HepG2 (cell line): ENCODE measurements at regions of chr5 and their contacts with region 1.

Region 1: GRCh38 chr5:149035372-149035790 is 27.5 kb downstream of the SH3TC2 start:
- DNase-seq: peak; percentile 53
- ATAC-seq: peak; percentile 96
- H3K4me3 ChIP-seq: no peak overlapping the region
- H3K27ac ChIP-seq: no peak overlapping the region
- H3K4me1 ChIP-seq: no peaks in the 10 kb centered on the region
- H3K27me3 ChIP-seq: no peaks in the 10 kb centered on the region
- CTCF ChIP-seq: peak; percentile 90
- EP300 ChIP-seq: no peak
- POLR2A ChIP-seq: no peak
- RAD21 ChIP-seq: no peak

Region 2: DNA sequence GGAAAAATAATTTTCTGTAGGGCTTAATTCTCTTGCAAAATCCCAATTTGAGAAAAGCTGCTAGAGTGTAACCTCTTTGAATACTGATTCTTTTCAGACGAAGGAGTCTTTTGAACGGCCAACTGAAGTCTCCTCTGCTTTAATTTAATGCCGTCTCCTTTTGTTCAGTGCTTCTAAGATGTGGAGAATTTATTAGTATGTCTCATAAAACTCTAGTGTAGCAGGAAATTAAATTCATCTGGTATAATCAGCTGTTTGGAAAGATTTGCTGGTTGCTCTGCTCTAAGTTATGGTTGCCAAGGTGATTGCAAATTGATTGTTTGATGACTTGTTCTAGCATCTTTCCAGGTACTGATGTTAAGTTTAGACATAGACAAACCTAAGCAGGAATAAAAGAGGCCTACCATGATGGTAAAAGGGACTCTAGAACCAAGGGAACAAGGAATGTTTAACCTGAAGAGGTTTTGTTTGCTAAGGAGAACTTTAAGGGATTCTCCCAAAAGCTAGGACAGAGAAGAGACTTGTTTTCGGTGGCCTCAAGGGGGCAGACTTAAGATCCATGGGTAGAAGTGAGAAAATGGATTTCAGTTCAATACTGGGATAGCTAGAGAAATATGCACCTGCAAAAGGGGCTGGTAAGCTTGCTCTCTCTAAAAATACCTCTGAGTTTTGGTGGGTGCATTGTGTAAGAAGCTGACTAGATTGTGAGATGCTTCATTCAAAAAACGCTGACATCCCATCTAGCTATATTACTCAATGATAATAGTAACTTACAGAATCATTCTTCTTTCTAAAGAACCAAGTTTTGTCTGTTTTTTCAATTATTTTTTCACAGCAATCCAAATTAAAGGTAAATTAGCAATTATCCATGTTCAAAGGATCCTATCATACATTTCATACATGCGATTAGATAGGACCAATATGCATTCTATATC is 214.7 kb before region 1 on chr5:
- CTCF ChIA-PET with region 1: interaction called, 9 read pairs
- POLR2A ChIA-PET with region 1: no interaction called
- in situ Hi-C with region 1: loop called (anchors 10 kb)
- intact Hi-C with region 1: loop called (anchors 1 kb)
- DNase-seq: peak; percentile 13
- ATAC-seq: peak; percentile 59; the same call in 1 of the 3 replicates
- H3K4me3 ChIP-seq: no peak overlapping the region
- H3K27ac ChIP-seq: no peak overlapping the region
- H3K4me1 ChIP-seq: peaks cover 4% of the 10 kb centered on the region
- H3K27me3 ChIP-seq: peaks cover 0 to 3% of the 10 kb centered on the region in 2 experiments; a peak in 3 of 5 replicates
- CTCF ChIP-seq: peak; percentile 57
- EP300 ChIP-seq: no peak
- POLR2A ChIP-seq: no peak
- RAD21 ChIP-seq: no peak

Region 3: DNA sequence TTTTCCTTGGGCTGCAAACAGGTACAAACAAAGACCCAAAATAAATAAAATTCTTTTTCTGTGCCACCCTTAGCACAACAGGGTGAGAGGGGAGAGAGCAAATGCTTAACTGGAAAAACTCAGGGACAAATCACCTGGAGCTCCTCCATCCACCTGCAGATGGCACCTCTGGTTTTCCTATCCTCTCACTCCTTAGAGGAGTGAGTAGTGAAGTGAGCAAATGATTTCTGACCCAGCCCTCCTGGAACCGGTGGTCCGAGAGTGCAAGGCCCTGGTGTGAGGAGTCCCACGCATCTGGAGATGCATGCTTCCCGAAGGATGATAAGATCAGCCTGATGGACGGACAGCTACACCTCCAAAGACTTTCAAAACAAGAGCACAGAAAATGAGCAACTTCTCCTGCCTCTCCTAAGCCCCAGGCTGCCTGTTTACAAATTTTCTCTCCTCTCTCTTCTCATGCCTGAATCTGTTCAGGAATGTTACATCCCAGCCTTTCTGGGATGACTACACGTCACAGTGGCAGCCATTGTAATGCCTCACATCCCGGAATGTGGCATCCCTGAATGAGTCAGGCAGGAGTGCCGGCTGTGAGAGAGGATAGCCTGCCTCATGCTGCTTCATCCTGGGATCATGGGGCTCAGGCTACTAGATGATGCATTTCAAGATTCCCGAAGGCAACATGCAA is 122.5 kb before region 1 on chr5:
- CTCF ChIA-PET with region 1: no interaction called
- POLR2A ChIA-PET with region 1: no interaction called
- in situ Hi-C with region 1: no loop called
- intact Hi-C with region 1: loop called (anchors 2 kb)
- DNase-seq: peak; percentile 16
- ATAC-seq: peak; percentile 79
- H3K4me3 ChIP-seq: no peak overlapping the region
- H3K27ac ChIP-seq: no peak overlapping the region
- H3K4me1 ChIP-seq: no peaks in the 10 kb centered on the region
- H3K27me3 ChIP-seq: no peaks in the 10 kb centered on the region
- CTCF ChIP-seq: peak; percentile 49
- EP300 ChIP-seq: no peak
- POLR2A ChIP-seq: no peak
- RAD21 ChIP-seq: no peak

Region 4: DNA sequence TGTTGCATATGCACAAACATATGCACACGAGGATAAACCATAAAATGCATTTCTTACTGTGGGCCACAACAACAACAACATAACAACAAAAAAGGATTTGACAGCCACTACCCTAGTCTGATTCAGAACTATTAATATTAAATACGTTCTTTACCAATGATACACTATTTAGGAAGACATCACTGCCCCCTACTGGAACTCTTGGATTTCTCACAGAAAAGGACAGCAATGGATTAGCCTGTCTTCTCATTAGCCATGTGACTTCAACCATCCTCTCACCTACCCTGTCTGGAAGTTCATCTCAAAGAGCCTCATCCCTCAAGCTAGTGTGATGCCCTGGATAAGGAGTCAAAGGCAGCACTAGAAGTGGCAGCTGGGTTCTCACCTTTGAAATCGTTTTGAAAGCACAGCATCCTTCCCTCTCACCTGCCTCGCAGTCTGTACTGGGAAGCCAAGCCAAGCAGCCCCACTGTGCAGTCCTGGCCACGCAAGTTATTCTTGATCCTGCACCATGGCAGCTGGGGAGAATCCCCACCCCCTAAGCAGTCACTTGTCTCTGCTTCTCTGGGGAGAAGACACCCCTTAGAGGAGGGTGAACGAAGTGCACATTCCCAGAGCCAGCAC is 37.1 kb before region 1 on chr5:
- CTCF ChIA-PET with region 1: no interaction called
- POLR2A ChIA-PET with region 1: no interaction called
- in situ Hi-C with region 1: no loop called
- intact Hi-C with region 1: loop called (anchors 5 kb)
- DNase-seq: peak; percentile 38
- ATAC-seq: peak; percentile 43; the same call in 2 of the 3 replicates
- H3K4me3 ChIP-seq: no peak overlapping the region
- H3K27ac ChIP-seq: no peak overlapping the region
- H3K4me1 ChIP-seq: peaks cover 16% of the 10 kb centered on the region
- H3K27me3 ChIP-seq: no peaks in the 10 kb centered on the region
- CTCF ChIP-seq: peak; percentile 47
- EP300 ChIP-seq: no peak
- POLR2A ChIP-seq: no peak
- RAD21 ChIP-seq: no peak

Region 5: GRCh38 chr5:149141224-149141956 is 106.0 kb after region 1 on chr5 and contains the start of gene ABLIM3:
- CTCF ChIA-PET with region 1: no interaction called
- POLR2A ChIA-PET with region 1: no interaction called
- in situ Hi-C with region 1: no loop called
- intact Hi-C with region 1: no loop called
- DNase-seq: no peak
- ATAC-seq: peak; percentile 89
- H3K4me3 ChIP-seq: peak within 1 kb of the TSS; percentile 63 to 82 (median 71)
- H3K27ac ChIP-seq: no peak within 1 kb of the TSS
- H3K4me1 ChIP-seq: peaks cover 46% of the 10 kb centered on the region
- H3K27me3 ChIP-seq: peaks cover 0 to 11% of the 10 kb centered on the region in 2 experiments; a peak in 4 of 5 replicates
- CTCF ChIP-seq: peak; percentile 87
- EP300 ChIP-seq: no peak
- POLR2A ChIP-seq: no peak
- RAD21 ChIP-seq: peak; percentile 90
- total RNA-seq, gene ABLIM3: 0.53 and 0.67 TPM in 2 replicates